Ovary (tissue), 10 donors: ENCODE measurements at regions of chr14 and their contacts with region 1.

Region 1: GRCh38 chr14:89973234-89973823 is 17.6 kb downstream of the TDP1 start:
- DNase-seq: peak; percentile 52 to 75 (median 62)
- H3K4me3 ChIP-seq: no peak overlapping the region
- H3K27ac ChIP-seq: no peak overlapping the region
- H3K4me1 ChIP-seq: no peaks in the 10 kb centered on the region
- H3K27me3 ChIP-seq: no peaks in the 10 kb centered on the region
- CTCF ChIP-seq: peak; percentile 46 to 63 (median 57)
- EP300 ChIP-seq: no peak
- POLR2A ChIP-seq: no peak

Region 2: GRCh38 chr14:90815822-90816700 is 842.7 kb after region 1 on chr14 and contains the start of gene TTC7B:
- intact Hi-C with region 1: loop called in 1 of 4 experiments (anchors 10 kb)
- DNase-seq: peak; percentile 31 to 75 (median 55)
- H3K4me3 ChIP-seq: peak within 1 kb of the TSS; percentile 81
- H3K27ac ChIP-seq: no peak within 1 kb of the TSS
- H3K4me1 ChIP-seq: peaks cover 8% of the 10 kb centered on the region
- H3K27me3 ChIP-seq: no peaks in the 10 kb centered on the region
- CTCF ChIP-seq: no peak
- EP300 ChIP-seq: no peak
- POLR2A ChIP-seq: no peak
- total RNA-seq, gene TTC7B: 18.2 to 39.5 (median 34.6) TPM